ENCODE measurements at regions of chr16 and their contacts with region 1.

Region 1: DNA sequence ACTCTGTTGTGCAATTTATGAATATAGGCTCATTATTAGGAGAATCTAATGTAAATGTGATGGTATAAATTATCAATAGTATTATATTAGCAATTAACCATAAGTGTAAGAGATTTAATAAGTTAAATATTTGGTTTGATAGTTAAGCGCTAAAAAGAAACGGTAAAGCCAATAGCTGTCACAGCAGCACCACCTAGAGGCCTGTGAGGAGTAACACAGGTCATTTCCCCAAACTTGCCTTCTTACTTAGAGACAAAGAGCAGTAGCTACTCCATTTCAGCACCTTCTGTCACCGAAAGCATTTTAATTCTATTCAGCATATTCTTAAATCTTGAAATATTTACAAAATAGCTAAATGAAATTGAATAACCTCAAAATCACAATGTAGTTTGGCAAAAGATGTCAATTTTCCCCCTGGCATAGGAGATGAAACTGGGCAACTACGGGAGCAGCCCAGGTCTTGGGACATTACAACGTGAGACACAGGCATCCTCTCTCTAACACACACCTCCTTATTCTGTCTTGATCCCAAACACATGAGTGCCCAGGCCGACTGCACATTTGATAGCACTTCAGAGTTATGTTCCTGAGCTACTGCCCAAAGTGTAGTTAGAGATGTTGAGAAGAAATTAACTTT is 14.2 kb upstream of the DYNLRB2 start:
- DNase-seq: peak; percentile 27
- H3K4me3 ChIP-seq: no peak overlapping the region
- H3K27ac ChIP-seq: no peak overlapping the region
- H3K27me3 ChIP-seq: no peaks in the 10 kb centered on the region
- CTCF ChIP-seq: peak; percentile 90

Region 2: GRCh38 chr16:80509872-80510271 is 16.7 kb before region 1 on chr16:
- CTCF ChIA-PET with region 1: interaction called, 40 read pairs
- POLR2A ChIA-PET with region 1: no interaction called
- DNase-seq: no peak
- H3K4me3 ChIP-seq: no peak overlapping the region
- H3K27ac ChIP-seq: no peak overlapping the region
- H3K27me3 ChIP-seq: no peaks in the 10 kb centered on the region
- CTCF ChIP-seq: no peak

Region 3: GRCh38 chr16:80540516-80541272 is 14.2 kb after region 1 on chr16 and contains the start of gene DYNLRB2:
- CTCF ChIA-PET with region 1: interaction called, 27 read pairs
- POLR2A ChIA-PET with region 1: no interaction called
- DNase-seq: peak; percentile 82
- H3K4me3 ChIP-seq: peak within 1 kb of the TSS; percentile 78
- H3K27ac ChIP-seq: no peak within 1 kb of the TSS
- H3K27me3 ChIP-seq: no peaks in the 10 kb centered on the region
- CTCF ChIP-seq: no peak
- polyA plus RNA-seq, gene DYNLRB2: 0.33 and 0.71 TPM in 2 replicates

Region 4: GRCh38 chr16:80608946-80609345 is 82.4 kb after region 1 on chr16:
- CTCF ChIA-PET with region 1: no interaction called
- POLR2A ChIA-PET with region 1: no interaction called
- DNase-seq: no peak
- H3K4me3 ChIP-seq: no peak overlapping the region
- H3K27ac ChIP-seq: no peak overlapping the region
- H3K27me3 ChIP-seq: no peaks in the 10 kb centered on the region
- CTCF ChIP-seq: no peak

Region 5: DNA sequence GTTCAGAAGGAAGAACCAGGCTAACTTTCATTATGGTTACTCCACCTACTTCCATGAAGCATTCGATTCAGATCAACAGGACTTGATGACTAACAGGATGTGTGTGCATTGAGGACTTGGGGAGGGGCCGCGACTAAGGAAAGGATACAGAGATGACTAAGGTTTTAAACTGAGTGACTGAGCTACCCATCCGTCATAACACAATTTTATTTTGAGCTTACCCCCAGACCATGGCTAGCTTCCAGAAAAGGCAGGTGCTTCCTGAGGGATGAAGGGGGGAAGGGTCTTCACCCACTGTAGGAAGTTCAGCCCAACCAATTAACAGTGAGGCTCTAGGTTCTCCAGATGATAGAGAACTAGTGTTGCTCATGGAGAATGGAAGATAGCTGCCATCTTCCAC is 280.4 kb after region 1 on chr16:
- CTCF ChIA-PET with region 1: interaction called, 11 read pairs
- POLR2A ChIA-PET with region 1: no interaction called
- DNase-seq: peak; percentile 11
- H3K4me3 ChIP-seq: no peak overlapping the region
- H3K27ac ChIP-seq: no peak overlapping the region
- H3K27me3 ChIP-seq: no peaks in the 10 kb centered on the region
- CTCF ChIP-seq: no peak

Region 6: GRCh38 chr16:80824718-80825364 is 298.3 kb after region 1 on chr16:
- CTCF ChIA-PET with region 1: interaction called, 96 read pairs
- POLR2A ChIA-PET with region 1: no interaction called
- DNase-seq: peak; percentile 38
- H3K4me3 ChIP-seq: no peak overlapping the region
- H3K27ac ChIP-seq: no peak overlapping the region
- H3K27me3 ChIP-seq: no peaks in the 10 kb centered on the region
- CTCF ChIP-seq: peak; percentile 80

Measured in AG04450 (cell line).